IMR-90 (cell line): ENCODE measurements at regions of chr1 and their contacts with region 1.

Region 1: DNA sequence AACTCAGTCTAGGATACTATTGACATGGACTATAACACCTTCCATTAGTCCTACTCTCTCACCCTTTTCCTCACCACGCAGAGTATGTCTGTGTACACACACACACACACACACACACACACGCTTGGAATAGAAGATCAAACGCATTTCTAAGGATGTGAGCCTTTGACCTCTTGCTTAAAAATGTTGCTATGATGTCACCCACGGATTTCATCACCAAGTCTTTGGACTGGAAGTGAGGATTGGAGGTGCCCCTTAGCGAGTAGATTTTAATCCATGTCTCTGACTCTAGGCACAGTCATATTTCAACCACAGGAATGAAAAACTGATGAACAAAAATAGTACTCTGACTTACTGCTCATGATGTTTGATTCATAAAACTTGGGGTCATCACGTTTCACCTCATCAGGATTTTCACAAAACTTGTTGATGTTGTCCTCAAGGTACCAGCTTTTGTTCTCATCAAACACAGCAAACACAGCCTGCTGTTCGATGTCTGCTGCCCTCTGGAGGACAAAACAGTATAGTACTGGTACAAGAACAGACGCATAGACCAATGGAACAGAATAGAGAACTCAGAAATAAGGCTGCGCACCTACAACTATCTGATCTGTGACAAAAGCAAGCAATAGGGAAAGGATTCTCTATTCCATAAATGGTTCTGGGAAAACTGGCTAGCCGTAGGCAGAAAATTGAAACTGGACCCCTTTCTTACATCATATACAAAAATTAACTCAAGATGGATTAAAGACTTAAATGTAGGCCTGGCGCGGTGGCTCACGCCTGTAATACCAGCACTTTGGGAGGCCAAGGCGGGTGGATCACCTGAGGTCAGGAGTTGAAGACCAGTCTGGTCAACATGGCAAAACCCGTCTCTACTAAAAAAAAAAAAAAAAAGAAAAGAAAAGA is 39.9 kb downstream of the F5 start:
- DNase-seq: peak; percentile 79
- ATAC-seq: peak; percentile 96
- H3K4me3 ChIP-seq: no peak overlapping the region
- H3K27ac ChIP-seq: no peak overlapping the region
- H3K4me1 ChIP-seq: no peaks in the 10 kb centered on the region
- H3K27me3 ChIP-seq: peaks cover 12% of the 10 kb centered on the region; the same call in 1 of the 2 replicates
- CTCF ChIP-seq: peak; percentile 82
- POLR2A ChIP-seq: no peak
- RAD21 ChIP-seq: peak; percentile 79

Region 2: DNA sequence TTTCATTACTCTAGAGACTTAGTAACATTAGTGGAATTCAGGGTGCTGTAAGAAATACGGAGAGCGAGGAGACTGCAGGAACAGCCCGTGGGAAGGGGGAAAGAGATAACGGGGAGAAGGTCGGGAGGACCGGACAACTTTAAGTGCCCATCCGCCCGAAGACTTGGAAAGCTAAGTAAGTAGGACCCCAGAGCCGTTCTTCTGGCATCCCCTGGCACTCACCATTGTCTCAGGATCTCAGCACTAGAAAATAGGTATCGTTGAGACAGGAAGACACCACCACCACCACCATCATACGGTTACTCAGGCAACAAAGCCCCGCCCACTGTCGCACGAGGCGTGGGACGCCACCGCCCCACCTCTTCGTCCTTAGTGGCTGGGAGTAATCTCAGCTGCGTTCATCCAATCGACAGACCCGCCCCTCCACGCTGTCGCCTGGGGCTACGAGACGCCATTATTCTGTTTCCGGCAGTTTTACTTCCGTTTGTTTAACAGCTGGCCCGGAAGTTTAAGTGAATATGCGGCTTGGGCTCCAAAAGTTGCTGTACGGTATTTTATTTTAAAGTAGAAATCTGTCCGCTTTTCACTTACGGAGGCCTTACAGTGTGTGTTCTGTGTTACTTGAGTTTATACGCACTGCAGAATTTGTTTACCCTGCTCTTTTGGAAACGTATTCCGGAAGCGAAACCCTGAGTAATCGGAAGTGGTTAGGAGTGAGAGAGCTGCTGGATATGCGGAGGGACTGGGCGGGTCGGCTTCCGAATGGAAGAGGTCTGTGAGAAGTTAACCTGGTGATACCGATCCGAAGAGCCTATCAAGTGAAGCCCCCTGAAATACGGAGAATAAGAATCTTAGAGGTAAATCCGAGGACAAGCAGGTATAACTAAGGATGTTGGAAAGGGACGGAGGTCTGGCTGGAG is 178.6 kb before region 1 on chr1 and contains the starts of genes BLZF1 and NME7:
- CTCF ChIA-PET with region 1: no interaction called
- POLR2A ChIA-PET with region 1: no interaction called
- dilution Hi-C with region 1: no loop called
- in situ Hi-C with region 1: no loop called
- intact Hi-C with region 1: loop called (anchors 5 kb)
- DNase-seq: peak; percentile 96
- ATAC-seq: peak; percentile 99
- H3K4me3 ChIP-seq: peak within 1 kb of the TSS; percentile 48
- H3K27ac ChIP-seq: peak within 1 kb of the TSS; percentile 62
- H3K4me1 ChIP-seq: 0 out of 2 replicates have a peak, but pooled peaks cover 4% of the 10 kb centered on the region
- H3K27me3 ChIP-seq: no peaks in the 10 kb centered on the region
- CTCF ChIP-seq: no peak
- POLR2A ChIP-seq: peak; percentile 81
- RAD21 ChIP-seq: no peak
- total RNA-seq, gene BLZF1: 24.2 and 38.9 TPM in 2 replicates
- total RNA-seq, gene NME7: 18.3 and 44.4 TPM in 2 replicates

Region 3: DNA sequence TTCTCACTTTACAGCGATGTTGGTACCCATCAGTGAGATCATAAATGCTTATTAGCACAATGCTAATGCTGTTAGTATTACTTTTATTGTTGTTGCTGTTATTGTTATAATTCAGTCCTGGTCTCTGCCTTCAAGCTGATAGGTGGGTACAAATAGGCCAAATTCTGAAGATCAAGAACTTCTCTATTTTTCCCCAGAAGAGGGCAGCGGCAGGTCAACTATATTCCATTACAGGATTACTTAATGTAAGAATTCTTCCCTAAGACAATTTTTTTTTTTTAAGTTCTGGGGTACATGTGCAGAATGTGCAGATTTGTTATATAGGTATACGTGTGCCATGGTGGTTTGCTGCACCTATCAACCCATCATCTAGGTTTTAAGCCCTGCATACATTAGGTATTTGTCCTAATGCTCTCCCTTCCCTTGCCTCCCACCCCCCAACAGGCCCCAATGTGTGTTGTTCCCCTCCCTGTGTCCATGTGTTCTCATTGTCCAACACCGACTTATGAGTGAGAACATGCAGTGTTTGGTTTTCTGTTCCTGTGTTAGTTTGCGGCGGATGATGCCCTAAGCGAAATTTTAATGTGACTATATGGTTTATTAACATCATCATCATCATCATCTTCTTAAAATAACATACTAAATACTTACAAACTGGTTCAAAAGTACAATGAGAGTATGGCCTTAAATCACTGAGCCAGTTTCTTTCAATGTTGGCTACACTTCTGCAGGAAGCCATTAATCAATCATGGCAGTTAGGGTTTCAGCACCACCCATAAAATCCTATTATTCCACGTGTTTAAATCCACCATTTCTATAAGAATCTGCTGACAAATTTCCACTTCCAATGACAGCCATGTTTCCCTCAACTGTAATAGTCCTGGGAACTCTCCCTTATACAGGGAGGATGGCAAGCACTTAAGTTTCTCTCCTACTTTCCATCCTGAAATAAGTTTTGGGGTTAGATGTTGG is 79.8 kb before region 1 on chr1:
- CTCF ChIA-PET with region 1: interaction called, 9 read pairs
- POLR2A ChIA-PET with region 1: no interaction called
- dilution Hi-C with region 1: no loop called
- in situ Hi-C with region 1: loop called (anchors 5 kb)
- intact Hi-C with region 1: loop called (anchors 1 kb)
- DNase-seq: peak; percentile 52
- ATAC-seq: peak; percentile 66
- H3K4me3 ChIP-seq: no peak overlapping the region
- H3K27ac ChIP-seq: no peak overlapping the region
- H3K4me1 ChIP-seq: no peaks in the 10 kb centered on the region
- H3K27me3 ChIP-seq: no peaks in the 10 kb centered on the region
- CTCF ChIP-seq: peak; percentile 50
- POLR2A ChIP-seq: no peak
- RAD21 ChIP-seq: peak; percentile 54

Region 4: GRCh38 chr1:169711469-169712281 is 165.3 kb after region 1 on chr1 and contains the start of gene SELL:
- CTCF ChIA-PET with region 1: interaction called, 3 read pairs
- POLR2A ChIA-PET with region 1: no interaction called
- dilution Hi-C with region 1: no loop called
- in situ Hi-C with region 1: no loop called
- intact Hi-C with region 1: loop called (anchors 1 kb)
- DNase-seq: peak; percentile 68
- ATAC-seq: peak; percentile 100
- H3K4me3 ChIP-seq: peak within 1 kb of the TSS; percentile 27; the same call in 1 of the 2 replicates
- H3K27ac ChIP-seq: no peak within 1 kb of the TSS
- H3K4me1 ChIP-seq: no peaks in the 10 kb centered on the region
- H3K27me3 ChIP-seq: no peaks in the 10 kb centered on the region; the same call in 1 of the 2 replicates
- CTCF ChIP-seq: peak; percentile 71
- POLR2A ChIP-seq: no peak
- RAD21 ChIP-seq: peak; percentile 63
- total RNA-seq, gene SELL: not detected in 2 replicates